ENCODE measurements at regions of chr2 and their contacts with region 1.

Region 1: GRCh38 chr2:190369635-190370034 is 26.2 kb downstream of the INPP1 start:
- DNase-seq: no peak
- ATAC-seq: no peak

Region 2: GRCh38 chr2:190328573-190329147 is 41.0 kb before region 1 on chr2:
- intact Hi-C with region 1: loop called (anchors 5 kb)
- DNase-seq: no peak
- ATAC-seq: no peak

Region 3: GRCh38 chr2:190534310-190535120 is 164.9 kb after region 1 on chr2 and contains the start of gene NEMP2:
- intact Hi-C with region 1: no loop called
- DNase-seq: peak; percentile 95
- ATAC-seq: peak; percentile 94
- total RNA-seq, gene NEMP2: 3.5 TPM

Measured in Right ventricle myocardium inferior (tissue), 1 donor.